Prostate gland (tissue), 2 donors: ENCODE measurements at regions of chr9 and their contacts with region 1.

Region 1: DNA sequence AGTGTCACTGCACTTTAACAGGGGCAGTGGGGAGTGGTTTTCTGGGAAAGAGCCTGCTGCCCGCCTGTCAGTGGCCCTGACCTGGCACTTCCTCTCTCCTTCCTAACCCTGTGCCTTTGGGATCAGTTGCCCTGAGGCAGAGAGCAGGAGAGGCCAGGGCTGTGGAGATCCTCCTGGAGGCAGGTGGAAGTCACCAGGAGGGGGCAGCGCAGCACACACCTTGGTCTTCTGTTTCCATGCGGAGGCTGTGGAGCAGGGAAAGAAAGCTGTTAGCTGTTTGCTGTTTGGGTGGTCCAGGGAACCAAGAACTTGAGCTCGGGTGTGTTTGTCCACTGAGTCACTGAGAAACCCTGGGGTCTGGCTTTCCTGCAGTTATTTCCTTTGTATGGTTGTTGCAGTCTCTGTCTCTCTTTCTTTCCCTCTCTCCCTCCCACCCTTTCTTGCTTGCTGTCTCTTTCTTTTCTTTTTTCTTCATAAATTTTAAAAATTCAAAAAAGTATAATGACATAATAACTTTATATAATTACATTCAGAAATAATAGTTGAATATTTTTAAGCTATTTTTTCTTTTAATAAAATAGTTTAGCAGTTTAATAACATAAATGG is 28.1 kb downstream of the NTRK2 start:
- DNase-seq: peak; percentile 53
- H3K4me3 ChIP-seq: no peak overlapping the region
- H3K27ac ChIP-seq: no peak overlapping the region
- H3K4me1 ChIP-seq: no peaks in the 10 kb centered on the region
- H3K27me3 ChIP-seq: no peaks in the 10 kb centered on the region
- CTCF ChIP-seq: peak; percentile 39 to 76 (median 67)
- POLR2A ChIP-seq: no peak

Region 2: GRCh38 chr9:84953797-84954705 is 256.4 kb after region 1 on chr9:
- intact Hi-C with region 1: loop called (anchors 10 kb)
- DNase-seq: peak; percentile 53
- H3K4me3 ChIP-seq: no peak overlapping the region
- H3K27ac ChIP-seq: no peak overlapping the region
- H3K4me1 ChIP-seq: no peaks in the 10 kb centered on the region
- H3K27me3 ChIP-seq: no peaks in the 10 kb centered on the region
- CTCF ChIP-seq: peak; percentile 61 to 83 (median 79)
- POLR2A ChIP-seq: no peak